Endothelial cell of umbilical vein (primary cell): ENCODE measurements at regions of chr6 and their contacts with region 1.

Region 1: GRCh38 chr6:4313044-4313686 is 177.8 kb upstream of the ECI2 start:
- DNase-seq: peak; percentile 95
- H3K4me3 ChIP-seq: no peak overlapping the region
- H3K27ac ChIP-seq: peak overlapping the region; percentile 56
- H3K4me1 ChIP-seq: peaks cover 23% of the 10 kb centered on the region
- H3K27me3 ChIP-seq: no peaks in the 10 kb centered on the region
- CTCF ChIP-seq: peak; percentile 28 to 45
- POLR2A ChIP-seq: no peak

Region 2: DNA sequence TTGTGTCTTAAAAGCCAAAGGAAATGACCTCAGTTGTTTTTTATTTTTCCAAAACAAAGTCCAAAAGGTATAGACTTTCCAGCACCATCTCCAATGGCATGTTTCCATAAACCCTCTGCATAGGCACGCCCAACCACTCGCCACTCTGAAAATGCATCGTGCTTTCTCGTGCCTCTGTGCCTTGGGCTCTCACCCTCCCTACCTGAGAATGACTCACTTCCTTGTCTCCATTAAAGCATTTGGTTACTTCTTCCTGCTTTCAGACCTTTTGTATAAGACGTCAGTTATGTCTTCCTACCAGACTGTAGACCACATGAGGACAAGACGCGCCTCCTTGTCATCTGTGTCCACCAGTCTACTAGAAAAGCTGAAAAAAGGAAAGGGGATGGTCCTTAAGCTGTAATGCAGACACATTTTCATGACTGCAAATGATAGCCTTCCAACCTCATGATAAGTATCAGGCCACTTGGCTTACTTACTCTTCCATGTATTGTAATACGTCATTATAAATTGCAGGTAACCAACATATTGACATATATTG is 401.9 kb after region 1 on chr6:
- CTCF ChIA-PET with region 1: no interaction called
- POLR2A ChIA-PET with region 1: no interaction called
- dilution Hi-C with region 1: no loop called
- intact Hi-C with region 1: no loop called
- DNase-seq: no peak
- H3K4me3 ChIP-seq: no peak overlapping the region
- H3K27ac ChIP-seq: no peak overlapping the region
- H3K4me1 ChIP-seq: no peaks in the 10 kb centered on the region
- H3K27me3 ChIP-seq: peaks cover 2 to 5% of the 10 kb centered on the region in 2 experiments
- CTCF ChIP-seq: no peak
- POLR2A ChIP-seq: no peak

Region 3: DNA sequence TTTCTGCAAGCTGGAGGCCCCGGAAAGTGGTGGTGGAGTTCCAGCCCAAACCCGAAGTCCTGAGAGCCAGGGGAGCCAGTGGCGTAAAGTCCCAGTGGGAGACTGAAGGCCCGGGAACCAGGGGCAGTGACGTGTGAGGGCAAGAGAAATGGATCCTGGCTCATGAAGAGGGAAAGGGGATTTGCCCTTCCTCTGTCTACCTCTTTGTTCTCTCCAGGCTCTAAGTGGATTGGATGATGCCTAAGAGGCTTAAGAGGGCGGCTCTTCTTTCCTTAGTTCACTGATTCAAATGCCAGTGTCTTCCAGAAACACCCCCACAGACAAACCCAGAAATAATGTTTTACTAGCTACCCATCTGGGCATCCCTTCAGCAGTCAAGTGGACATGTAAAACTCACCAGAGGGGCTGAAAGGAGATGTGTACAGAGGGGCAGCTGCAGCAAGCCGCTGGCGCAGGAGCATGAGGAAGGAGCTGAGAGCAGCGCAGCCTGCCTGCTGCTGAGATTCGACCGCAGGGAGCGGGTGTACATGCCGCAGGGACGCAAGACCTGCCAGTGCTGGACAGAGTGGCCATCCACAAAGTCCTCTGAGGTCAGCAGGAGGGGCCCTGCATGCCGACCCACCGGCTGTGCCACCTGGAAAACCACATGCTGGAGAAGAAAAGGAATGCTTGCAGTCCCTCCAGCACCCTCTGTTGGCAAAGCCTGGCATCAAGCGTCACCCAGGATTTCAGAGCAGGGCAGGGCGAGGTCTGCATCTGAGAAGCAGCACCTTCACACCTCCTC is 492.6 kb after region 1 on chr6:
- CTCF ChIA-PET with region 1: interaction called, 5 read pairs
- POLR2A ChIA-PET with region 1: no interaction called
- dilution Hi-C with region 1: no loop called
- intact Hi-C with region 1: loop called (anchors 1 kb)
- DNase-seq: peak; percentile 41
- H3K4me3 ChIP-seq: no peak overlapping the region
- H3K27ac ChIP-seq: no peak overlapping the region
- H3K4me1 ChIP-seq: peaks cover 9% of the 10 kb centered on the region
- H3K27me3 ChIP-seq: no peaks in the 10 kb centered on the region
- CTCF ChIP-seq: peak; percentile 49 to 57
- POLR2A ChIP-seq: no peak

Region 4: GRCh38 chr6:4936681-4937041 is 623.5 kb after region 1 on chr6:
- CTCF ChIA-PET with region 1: interaction called, 6 read pairs
- POLR2A ChIA-PET with region 1: no interaction called
- dilution Hi-C with region 1: no loop called
- intact Hi-C with region 1: loop called (anchors 1 kb)
- DNase-seq: peak; percentile 67
- H3K4me3 ChIP-seq: no peak overlapping the region
- H3K27ac ChIP-seq: no peak overlapping the region
- H3K4me1 ChIP-seq: peaks cover under 1% of the 10 kb centered on the region
- H3K27me3 ChIP-seq: no peaks in the 10 kb centered on the region
- CTCF ChIP-seq: peak; percentile 41 to 59
- POLR2A ChIP-seq: no peak

Region 5: DNA sequence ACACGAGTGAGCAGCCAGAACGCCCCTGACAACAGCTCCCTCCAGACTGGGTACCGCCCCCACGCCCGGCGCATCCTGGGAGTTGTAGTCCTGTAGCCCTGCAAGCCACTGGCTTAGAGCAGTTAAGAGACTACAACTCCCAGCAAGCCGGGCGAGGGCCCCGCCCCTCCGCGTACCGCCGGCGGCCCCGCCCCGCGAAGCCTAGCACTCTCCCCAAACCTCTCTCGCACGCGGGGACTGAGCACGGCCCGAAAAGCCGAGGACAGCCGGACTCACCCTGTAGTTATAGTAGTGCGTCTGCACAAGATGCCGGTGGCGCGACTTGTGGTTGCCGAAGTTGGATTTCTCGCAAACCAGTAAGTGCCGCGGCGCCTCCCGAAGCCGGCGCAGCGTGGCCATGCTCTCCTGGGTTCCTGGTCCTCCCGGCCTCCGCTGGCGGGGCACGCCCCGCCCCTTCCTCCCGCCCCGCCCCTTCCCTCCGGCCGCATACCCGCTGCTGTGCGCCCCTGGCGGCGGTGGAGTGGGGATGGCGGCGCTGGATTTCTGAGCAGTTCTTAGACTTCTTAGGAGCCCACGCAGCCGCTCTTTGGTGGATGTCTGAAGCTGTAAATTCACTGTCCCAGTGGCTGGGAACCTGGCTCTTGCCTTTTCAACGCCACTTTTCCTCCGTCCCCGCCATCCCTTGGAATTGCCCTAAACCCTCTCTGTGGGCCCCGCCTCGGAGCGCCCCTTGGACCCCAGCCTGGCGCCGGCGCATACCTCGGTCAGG is 690.6 kb after region 1 on chr6 and contains the start of gene RPP40:
- CTCF ChIA-PET with region 1: no interaction called
- POLR2A ChIA-PET with region 1: no interaction called
- dilution Hi-C with region 1: no loop called
- intact Hi-C with region 1: loop called (anchors 1 kb)
- DNase-seq: peak; percentile 98
- H3K4me3 ChIP-seq: peak within 1 kb of the TSS; percentile 51 to 72 (median 63)
- H3K27ac ChIP-seq: peak within 1 kb of the TSS; percentile 79
- H3K4me1 ChIP-seq: peaks cover 7% of the 10 kb centered on the region
- H3K27me3 ChIP-seq: no peaks in the 10 kb centered on the region
- CTCF ChIP-seq: peak; percentile 74 to 85
- POLR2A ChIP-seq: peak; percentile 88
- total RNA-seq, gene RPP40: 12.6 and 15.3 TPM in 2 replicates